Mucosa of descending colon (tissue), 3 donors: ENCODE measurements at regions of chr19 and their contacts with region 1.

Region 1: DNA sequence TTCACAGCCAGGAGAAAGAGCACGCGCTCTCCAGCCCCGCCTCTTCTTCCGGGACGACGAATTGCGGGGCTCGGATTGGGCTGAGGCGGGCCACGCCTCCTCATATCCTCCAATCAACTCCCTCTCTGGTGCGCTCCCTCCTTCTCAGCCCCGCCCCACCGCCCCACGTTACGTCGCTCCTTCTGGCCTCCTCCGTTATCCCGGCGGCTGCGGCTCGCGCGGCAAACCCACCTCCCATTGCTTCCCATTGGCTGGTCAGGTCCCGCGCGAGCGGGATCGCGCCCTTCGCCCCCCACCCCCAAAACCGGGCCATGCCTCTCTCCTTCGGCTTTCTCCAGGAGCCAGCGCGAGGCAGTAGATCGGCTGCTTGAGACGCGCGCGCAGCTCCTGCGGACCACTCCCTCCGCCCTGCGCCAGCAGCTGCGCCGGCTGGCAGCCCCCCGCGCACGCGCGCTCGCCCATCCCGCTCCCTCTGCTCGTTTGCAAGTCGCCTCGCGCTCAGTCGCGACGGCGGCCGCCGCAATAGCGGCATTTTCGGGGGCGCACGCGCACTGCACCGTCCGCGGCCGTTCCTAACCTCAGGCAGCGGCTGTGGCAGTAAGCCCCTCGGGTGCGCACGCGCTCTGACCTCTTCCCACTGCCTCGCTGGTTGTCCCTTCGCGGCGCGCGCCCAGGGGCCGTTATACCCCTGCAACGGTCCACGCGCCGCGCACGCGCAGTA is 512 bp upstream of the ARHGAP35 start:
- DNase-seq: peak; percentile 97 to 99 (median 98)
- ATAC-seq: peak; percentile 90
- H3K4me3 ChIP-seq: peak overlapping the region; percentile 83
- H3K4me1 ChIP-seq: peaks cover 43% of the 10 kb centered on the region
- CTCF ChIP-seq: no peak

Region 2: GRCh38 chr19:46944918-46945628 is 84.8 kb after region 1 on chr19:
- intact Hi-C with region 1: loop called in 1 of 2 experiments (anchors 10 kb)
- DNase-seq: peak; percentile 53 to 62 (median 59)
- ATAC-seq: peak; percentile 79
- H3K4me3 ChIP-seq: no peak overlapping the region
- H3K4me1 ChIP-seq: peaks cover 46% of the 10 kb centered on the region
- CTCF ChIP-seq: no peak

Region 3: GRCh38 chr19:46990991-46991676 is 130.8 kb after region 1 on chr19:
- intact Hi-C with region 1: loop called (anchors 5 kb)
- DNase-seq: peak; percentile 67 to 91 (median 85)
- ATAC-seq: peak; percentile 85
- H3K4me3 ChIP-seq: no peak overlapping the region
- H3K4me1 ChIP-seq: peaks cover 7% of the 10 kb centered on the region
- CTCF ChIP-seq: peak; percentile 75